ENCODE measurements at regions of chr3 and their contacts with region 1.

Region 1: DNA sequence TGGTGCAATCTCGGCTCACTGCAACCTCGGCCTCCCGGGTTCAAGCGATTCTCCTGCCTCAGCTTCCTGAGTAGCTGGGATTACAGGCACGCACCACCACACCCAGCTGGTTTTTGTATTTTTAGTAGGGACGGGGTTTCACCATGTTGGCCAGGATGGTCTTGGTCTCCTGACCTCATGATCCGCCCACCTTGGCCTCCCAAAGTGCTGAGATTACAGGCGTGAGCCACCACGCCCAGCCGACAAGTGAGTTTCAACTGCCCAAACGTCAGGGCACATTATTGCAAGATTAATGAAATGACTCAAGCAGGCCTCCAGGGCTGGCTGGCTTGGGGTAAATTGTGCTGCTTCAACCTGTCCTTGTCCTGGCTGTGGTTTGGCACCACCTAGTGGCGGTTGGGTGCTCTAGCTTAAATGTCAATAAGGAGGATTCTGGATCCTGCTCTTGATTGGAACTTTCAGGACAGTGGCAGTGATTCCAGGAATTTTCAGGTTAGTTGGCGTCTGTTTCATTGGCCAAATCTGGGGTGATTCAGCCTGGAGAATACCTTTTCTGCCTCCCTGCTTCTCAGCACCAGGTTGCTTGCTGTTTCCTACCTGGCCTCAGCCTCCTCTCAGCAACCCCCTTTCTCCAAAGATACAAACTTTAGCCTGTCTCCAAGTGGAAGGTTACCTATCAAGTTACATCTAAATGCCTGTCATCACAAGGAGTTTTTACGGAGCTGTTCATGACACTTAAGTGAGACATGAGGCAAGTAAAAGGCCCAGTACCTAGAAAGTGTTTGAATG is 32.4 kb upstream of the SACM1L start:
- DNase-seq: peak; percentile 82

Region 2: DNA sequence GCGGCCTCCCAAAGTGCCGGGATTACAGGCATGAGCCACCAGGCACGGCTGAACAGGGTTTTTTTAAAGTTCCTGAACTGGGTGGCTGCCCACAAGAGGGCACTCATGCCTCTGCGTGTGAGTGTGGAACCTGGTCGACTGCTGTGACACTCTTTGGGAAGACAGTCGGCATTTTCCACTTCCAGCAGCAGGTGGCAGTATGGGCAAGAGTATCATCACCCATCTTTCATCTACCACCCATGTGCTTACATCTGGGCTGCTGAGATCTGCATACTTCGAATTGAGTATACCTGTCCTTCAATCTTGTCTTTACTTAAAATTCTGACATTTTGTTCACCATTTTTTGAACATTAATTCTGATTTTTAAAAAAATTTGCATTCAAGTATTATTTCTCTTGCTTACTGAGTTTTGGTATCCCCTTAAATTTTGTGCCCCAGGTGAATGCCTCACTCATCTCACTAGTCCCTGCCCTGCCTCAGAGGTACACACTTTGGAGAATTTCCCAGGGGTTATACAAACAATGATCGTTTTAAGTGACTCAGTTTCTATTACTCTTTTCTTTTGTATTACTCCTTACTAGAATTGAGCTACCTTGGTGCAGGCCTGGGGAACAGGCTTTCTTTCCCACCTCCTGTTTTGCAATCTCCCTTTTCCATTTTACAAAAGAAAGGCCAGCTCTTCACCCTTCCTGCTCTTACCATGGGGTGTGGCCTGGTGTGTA is 618.9 kb before region 1 on chr3:
- in situ Hi-C with region 1: loop called (anchors 25 kb)
- DNase-seq: peak; percentile 99

Region 3: GRCh38 chr3:45507820-45508317 is 148.9 kb before region 1 on chr3:
- in situ Hi-C with region 1: loop called (anchors 25 kb)
- DNase-seq: peak; percentile 82

Region 4: GRCh38 chr3:45593708-45594609 is 62.8 kb before region 1 on chr3:
- in situ Hi-C with region 1: loop called (anchors 10 kb)
- DNase-seq: peak; percentile 87

Region 5: GRCh38 chr3:45612918-45613602 is 43.7 kb before region 1 on chr3:
- in situ Hi-C with region 1: no loop called
- DNase-seq: no peak